ENCODE measurements at regions of chr12 and their contacts with region 1.

Region 1: DNA sequence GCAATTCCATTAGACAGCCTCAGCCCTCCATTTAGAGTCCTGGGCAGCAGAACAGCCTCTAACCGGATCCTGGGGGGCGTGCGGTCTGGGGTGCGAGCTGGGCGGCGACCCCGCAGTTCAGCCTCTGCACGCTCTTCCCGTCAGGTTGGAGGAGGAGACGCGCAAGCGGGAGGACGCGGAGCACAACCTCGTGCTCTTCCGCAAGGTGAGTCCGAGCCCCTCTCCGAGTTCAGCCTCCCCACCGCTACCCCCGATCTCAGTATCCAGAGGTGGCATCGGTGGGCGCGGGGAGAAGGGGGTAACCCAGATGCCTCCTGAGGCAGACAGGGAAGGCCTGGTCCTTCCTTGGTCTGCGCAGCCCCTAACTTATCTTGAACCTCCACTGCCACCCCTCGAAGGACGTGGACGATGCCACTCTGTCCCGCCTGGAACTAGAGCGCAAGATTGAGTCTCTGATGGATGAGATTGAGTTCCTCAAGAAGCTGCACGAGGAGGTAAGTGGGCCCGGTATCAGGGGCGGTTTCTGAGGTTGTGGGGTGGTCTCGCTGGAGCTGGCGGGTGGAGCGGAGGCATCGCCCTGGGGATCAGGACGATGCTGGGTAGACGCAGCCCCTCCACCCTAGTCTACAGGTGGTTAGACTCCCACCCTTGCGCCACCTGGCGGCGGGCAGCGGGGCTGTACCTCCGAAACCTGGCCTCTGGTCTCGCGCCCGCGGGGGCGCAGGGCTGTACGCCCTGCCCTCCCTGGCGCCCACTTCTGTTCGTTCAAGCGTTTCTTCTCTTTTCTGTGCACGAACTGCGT is 1.3 kb downstream of the PRPH start:
- DNase-seq: peak; percentile 82
- ATAC-seq: peak; percentile 80
- H3K4me3 Mint-ChIP-seq: peak overlapping the region; percentile 53
- H3K27ac Mint-ChIP-seq: no peak overlapping the region
- H3K4me1 Mint-ChIP-seq: peaks cover 12% of the 10 kb centered on the region
- H3K27me3 Mint-ChIP-seq: peaks cover 46% of the 10 kb centered on the region

Region 2: DNA sequence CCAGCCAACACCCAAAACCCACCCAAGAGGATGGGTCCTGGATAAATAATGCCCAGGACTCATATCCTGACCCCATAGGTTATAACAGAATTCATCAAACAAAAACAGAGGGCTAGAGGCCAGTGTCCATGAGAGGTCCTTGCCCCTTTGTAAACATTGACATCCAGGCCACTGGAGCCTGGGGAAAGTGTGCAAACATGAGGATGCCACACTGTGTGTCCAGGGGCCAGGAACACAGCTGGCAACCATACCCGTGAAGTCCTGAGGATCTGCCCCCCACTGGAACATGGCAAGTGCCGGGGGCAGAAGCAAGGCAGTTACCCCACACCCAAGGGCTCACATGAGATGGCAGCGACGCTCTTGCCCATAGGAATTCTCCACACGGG is 231.5 kb before region 1 on chr12:
- CTCF ChIA-PET with region 1: no interaction called
- POLR2A ChIA-PET with region 1: no interaction called
- intact Hi-C with region 1: no loop called
- DNase-seq: no peak
- ATAC-seq: no peak
- H3K4me3 Mint-ChIP-seq: no peak overlapping the region
- H3K27ac Mint-ChIP-seq: no peak overlapping the region
- H3K4me1 Mint-ChIP-seq: peaks cover 19% of the 10 kb centered on the region
- H3K27me3 Mint-ChIP-seq: no peaks in the 10 kb centered on the region

Region 3: DNA sequence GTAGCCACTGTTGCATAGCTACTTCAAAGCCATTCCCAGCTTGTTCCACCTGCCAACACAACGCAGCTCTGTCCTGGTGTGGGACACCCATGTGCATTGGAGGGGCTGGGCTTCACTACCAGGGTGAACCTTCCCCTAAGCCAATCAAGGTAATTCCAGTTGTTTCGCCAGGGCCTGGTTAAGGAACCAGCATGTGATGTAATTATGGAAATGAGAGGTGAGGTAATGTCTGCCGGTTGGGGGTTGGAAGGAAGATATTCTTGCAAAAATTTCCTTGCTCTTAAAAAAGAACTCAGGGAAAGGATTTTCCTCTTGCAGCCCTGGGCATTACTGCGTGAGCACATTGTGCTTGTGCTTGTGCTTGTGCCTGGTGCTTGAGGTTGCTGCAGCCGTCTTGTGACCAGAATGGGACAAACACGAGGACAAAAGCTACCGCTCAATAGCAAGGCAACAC is 16.5 kb before region 1 on chr12:
- CTCF ChIA-PET with region 1: interaction called, 11 read pairs
- POLR2A ChIA-PET with region 1: interaction called, 4 read pairs
- intact Hi-C with region 1: no loop called
- DNase-seq: no peak
- ATAC-seq: no peak
- H3K4me3 Mint-ChIP-seq: no peak overlapping the region
- H3K27ac Mint-ChIP-seq: no peak overlapping the region
- H3K4me1 Mint-ChIP-seq: no peaks in the 10 kb centered on the region
- H3K27me3 Mint-ChIP-seq: peaks cover 5% of the 10 kb centered on the region

Region 4: DNA sequence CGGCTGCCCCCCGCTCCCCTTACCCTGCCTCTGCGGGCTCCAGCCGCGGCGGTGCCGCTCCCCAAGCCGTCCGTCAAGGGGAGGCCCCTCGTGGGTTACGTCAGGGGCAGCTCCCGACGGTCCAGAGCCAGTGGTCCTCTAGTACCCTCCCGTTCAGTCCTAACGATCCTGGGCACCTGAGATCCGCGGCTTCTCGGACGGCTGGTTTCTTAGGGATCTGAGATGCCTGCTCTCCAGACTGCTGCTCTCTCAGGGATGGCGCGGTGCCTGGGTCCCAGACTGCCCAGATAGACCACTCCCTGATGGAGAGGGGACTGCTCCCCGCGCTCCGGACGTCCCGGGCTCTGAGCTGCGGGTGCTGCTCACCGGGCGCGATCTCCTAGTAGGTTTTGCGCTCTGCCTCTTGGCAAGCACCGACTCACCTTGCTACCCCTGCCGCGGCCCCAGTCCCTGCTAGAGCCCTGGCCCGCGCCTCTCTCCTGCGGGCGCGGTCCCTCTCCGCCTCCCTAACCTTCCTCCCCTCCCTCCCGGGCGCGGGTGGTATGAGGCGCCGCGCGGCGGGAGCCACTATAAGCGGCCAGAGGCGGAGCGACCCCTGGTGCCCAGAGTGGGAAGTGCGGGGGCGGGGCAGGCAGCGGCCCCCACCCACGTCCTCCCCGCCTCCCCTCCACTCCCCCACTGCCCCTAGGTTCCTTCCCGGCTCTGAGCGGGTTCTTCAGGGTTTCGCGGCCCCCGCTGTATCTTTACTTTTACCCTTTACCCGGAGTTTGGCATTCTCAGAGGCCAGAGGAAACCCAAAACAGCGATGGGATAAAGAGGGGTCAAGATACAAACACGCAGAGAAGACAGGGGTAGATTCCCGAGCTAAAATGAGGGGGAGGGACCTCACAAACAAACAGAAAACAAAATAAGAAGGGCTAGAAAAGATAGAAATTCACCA is 40.7 kb after region 1 on chr12 and contains the start of gene C1QL4:
- CTCF ChIA-PET with region 1: interaction called, 74 read pairs
- POLR2A ChIA-PET with region 1: no interaction called
- intact Hi-C with region 1: loop called (anchors 1 to 2 kb)
- DNase-seq: peak; percentile 92
- ATAC-seq: peak; percentile 82
- H3K4me3 Mint-ChIP-seq: peak within 1 kb of the TSS; percentile 34
- H3K27ac Mint-ChIP-seq: no peak within 1 kb of the TSS
- H3K4me1 Mint-ChIP-seq: peaks cover 25% of the 10 kb centered on the region
- H3K27me3 Mint-ChIP-seq: peaks cover 75% of the 10 kb centered on the region
- total RNA-seq, gene C1QL4: not detected

Region 5: DNA sequence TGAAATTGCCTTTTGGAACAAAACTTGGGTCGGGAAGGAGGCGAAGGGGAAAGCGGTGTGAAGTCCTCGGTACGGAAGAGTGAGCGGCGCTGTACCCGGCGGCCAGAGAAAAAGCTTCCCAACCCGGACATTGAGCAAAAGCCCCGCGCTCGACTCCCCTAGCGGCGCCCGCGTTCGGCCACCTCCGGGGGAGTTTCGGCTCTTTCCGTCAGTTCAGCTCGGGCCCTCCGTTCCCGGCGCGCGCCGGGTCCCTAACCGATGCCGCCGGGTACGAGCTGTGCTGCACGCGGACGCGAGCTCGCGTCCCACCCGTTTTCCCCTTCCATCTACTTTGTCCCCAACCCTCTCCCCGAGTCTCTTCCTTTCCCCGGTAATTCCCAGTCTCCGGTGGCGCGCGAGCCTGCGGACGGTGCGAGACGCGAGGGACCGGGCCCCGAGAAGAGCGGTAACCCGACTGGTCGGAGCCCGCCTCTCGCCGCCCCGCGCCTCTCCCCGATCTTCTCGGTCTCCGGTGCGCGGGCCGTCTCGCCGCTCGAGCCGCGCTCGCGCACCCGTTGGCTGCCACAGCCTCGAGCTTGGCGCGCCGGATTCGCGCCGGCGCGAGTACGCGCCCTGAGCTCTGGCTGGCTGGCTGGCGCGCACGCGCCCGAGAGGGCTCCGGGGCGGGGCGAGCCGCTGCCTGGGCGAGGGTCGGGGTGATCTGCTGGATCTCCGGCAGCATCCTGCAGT is 70.6 kb after region 1 on chr12:
- CTCF ChIA-PET with region 1: interaction called, 11 read pairs
- POLR2A ChIA-PET with region 1: no interaction called
- intact Hi-C with region 1: no loop called
- DNase-seq: peak; percentile 94
- ATAC-seq: peak; percentile 86
- H3K4me3 Mint-ChIP-seq: peak overlapping the region; percentile 97
- H3K27ac Mint-ChIP-seq: peak overlapping the region; percentile 99
- H3K4me1 Mint-ChIP-seq: peaks cover 25% of the 10 kb centered on the region
- H3K27me3 Mint-ChIP-seq: no peaks in the 10 kb centered on the region

Measured in activated CD4-positive, alpha-beta T cell treated with anti-CD3 and anti-CD28 coated beads for 36 hours (primary cell).